Heart left ventricle (tissue), 16 donors: ENCODE measurements at regions of chr15 and their contacts with region 1.

Region 1: DNA sequence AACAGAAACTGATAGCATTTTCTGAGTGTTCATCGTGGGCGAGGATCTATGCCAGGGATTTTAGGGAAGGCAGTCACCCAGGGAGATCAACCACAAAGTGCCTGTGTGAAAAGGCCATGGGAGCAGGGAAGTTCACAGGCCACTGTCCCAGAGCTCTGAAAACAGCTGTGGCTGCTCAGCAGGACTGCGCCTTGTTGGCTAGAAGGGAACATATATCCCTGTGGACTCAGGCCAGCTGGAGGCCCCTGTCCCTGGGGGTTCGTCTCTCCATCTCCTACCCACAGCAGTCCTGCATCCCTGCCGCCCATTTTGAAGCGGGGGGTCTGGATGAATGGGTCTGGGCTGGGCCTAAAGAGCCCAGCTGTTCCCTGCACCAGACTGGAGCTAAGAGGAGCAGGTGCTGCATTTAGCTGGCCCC is 27.8 kb downstream of the PPCDC start:
- DNase-seq: peak; percentile 58 to 81 (median 78)
- ATAC-seq: peak in 2 of 4 donors; percentile 4 to 39
- H3K4me3 ChIP-seq: no peak overlapping the region
- H3K27ac ChIP-seq: peak overlapping the region in 10 of 12 donors; percentile 4 to 95 (median 82)
- H3K4me1 ChIP-seq: peaks cover 37 to 89% (median 71%) of the 10 kb centered on the region in 12 donors
- H3K27me3 ChIP-seq: no peaks in the 10 kb centered on the region
- CTCF ChIP-seq: no peak
- POLR2A ChIP-seq: no peak

Region 2: GRCh38 chr15:74995241-74995778 is 55.9 kb before region 1 on chr15 and contains the start of gene SCAMP5:
- intact Hi-C with region 1: no loop called
- DNase-seq: peak; percentile 92 to 95 (median 94)
- ATAC-seq: peak; percentile 91 to 95 (median 93)
- H3K4me3 ChIP-seq: peak within 1 kb of the TSS; percentile 47 to 87 (median 72)
- H3K27ac ChIP-seq: peak within 1 kb of the TSS in 1 of 12 donors; percentile 50
- H3K4me1 ChIP-seq: peaks cover 0 to 13% (median 8%) of the 10 kb centered on the region in 12 donors
- H3K27me3 ChIP-seq: peaks cover 0 to 18% (median 3%) of the 10 kb centered on the region in 9 donors
- CTCF ChIP-seq: no peak
- POLR2A ChIP-seq: no peak
- total RNA-seq, gene SCAMP5: 1.7 to 7.1 (median 4.2) TPM

Region 3: DNA sequence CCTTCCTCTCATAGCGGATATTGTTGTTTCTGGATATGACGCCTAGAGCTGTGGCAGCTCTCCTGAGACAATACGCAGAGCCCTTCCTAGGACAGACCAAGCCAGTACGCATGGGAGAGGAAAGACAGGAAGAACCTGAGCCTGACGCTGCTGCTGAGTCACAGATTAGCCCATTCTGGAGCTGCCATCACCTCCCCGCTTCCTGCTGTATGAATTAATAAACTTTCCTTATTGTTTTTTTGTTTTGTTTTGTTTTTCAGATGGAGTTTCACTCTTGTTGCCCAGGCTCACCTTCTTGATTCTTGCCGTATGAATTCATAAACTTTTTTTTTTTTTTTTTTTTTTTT is 39.2 kb after region 1 on chr15:
- intact Hi-C with region 1: loop called in 1 of 10 experiments (anchors 5 kb)
- DNase-seq: peak in 4 of 5 donors; percentile 67 to 78 (median 72)
- ATAC-seq: peak; percentile 88 to 98 (median 96)
- H3K4me3 ChIP-seq: peak overlapping the region in 1 of 12 donors; percentile 15
- H3K27ac ChIP-seq: peak overlapping the region; percentile 68 to 91 (median 82)
- H3K4me1 ChIP-seq: peaks cover 0 to 11% (median 5%) of the 10 kb centered on the region in 12 donors
- H3K27me3 ChIP-seq: no peaks in the 10 kb centered on the region
- CTCF ChIP-seq: no peak
- POLR2A ChIP-seq: no peak